Activated naive CD4-positive, alpha-beta T cell treated with anti-CD3 and anti-CD28 coated beads for 36 hours (primary cell): ENCODE measurements at regions of chr17 and their contacts with region 1.

Region 1: DNA sequence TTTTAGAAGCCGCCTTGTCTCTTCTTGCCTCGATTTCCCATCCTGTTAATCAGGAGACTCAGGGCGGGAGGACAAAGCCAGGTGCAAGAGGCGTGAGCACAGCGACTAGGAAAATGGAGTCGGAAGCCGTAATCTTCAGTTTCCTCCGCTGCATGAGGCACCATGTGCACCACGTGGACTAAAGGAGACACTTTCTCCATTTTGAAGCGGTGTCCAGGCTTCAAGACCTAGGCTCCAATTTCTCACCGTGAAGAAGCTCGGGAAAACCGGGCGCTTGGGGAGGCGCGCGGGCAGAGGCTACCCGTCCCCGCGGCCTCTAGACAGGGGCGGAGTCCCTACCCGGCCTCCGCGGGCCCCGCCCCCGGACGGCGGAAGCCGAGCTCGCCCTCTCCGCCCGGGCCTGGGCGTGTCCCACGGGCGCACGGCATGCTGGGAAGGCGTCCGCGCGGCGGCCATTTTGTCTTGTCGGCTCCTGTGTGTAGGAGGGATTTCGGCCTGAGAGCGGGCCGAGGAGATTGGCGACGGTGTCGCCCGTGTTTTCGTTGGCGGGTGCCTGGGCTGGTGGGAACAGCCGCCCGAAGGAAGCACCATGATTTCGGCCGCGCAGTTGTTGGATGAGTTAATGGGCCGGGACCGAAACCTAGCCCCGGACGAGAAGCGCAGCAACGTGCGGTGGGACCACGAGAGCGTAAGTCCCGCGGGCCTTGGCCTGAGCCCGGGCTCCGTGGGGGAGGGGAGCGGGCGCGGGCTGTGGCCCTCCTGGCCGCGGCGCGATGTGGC is at the start of gene LUC7L3:
- DNase-seq: peak; percentile 95
- H3K4me3 Mint-ChIP-seq: peak within 1 kb of the TSS; percentile 97
- H3K27ac Mint-ChIP-seq: peak within 1 kb of the TSS; percentile 98
- H3K4me1 Mint-ChIP-seq: peaks cover 25% of the 10 kb centered on the region
- H3K27me3 Mint-ChIP-seq: no peaks in the 10 kb centered on the region
- total RNA-seq, gene LUC7L3: 120 to 136 TPM

Region 2: DNA sequence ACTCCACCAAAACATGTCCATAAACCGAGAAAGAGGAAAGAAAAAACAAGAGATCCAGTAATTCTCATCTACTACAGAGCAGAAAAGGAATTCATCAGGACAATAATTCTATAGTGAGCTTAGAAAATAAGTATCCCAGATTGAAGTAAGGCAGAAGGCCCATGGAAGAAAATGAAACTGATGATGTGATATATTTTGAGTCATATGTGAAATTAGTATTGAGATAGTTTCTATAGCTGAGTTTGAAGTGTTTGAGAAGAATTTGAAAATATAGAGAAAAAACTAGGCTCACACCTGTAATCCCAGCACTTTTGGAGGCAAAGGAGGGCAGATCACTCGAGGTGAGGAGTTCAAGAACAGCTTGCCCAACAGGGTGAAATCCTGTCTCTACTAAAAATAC is 19.8 kb after region 1 on chr17:
- CTCF ChIA-PET with region 1: interaction called, 3 read pairs
- intact Hi-C with region 1: loop called (anchors 2 kb)
- DNase-seq: no peak
- H3K4me3 Mint-ChIP-seq: no peak overlapping the region
- H3K27ac Mint-ChIP-seq: peak overlapping the region; percentile 54
- H3K4me1 Mint-ChIP-seq: peaks cover 52% of the 10 kb centered on the region
- H3K27me3 Mint-ChIP-seq: no peaks in the 10 kb centered on the region

Region 3: DNA sequence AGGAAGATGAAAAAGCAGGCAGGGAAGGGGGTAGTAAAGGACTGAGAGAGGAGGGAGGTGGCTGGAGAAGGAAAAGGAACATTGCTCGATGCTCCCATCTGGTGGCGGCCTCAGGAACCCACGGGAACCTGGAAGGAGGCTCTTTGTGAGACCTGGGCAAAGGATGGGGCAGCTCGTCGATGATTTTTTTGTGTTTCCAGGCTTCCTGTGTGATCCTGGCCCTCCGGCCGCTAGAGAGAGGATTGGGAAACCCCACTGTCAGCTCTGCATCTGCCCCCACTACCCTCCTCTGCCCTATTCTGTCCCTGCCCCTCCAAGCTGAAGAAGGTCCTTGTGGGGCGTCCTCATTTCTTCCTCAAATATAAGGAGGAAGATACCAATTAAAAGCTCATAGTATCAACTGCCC is 122.6 kb after region 1 on chr17:
- CTCF ChIA-PET with region 1: no interaction called
- intact Hi-C with region 1: no loop called
- DNase-seq: peak; percentile 73
- H3K4me3 Mint-ChIP-seq: no peak overlapping the region
- H3K27ac Mint-ChIP-seq: no peak overlapping the region
- H3K4me1 Mint-ChIP-seq: peaks cover 3% of the 10 kb centered on the region
- H3K27me3 Mint-ChIP-seq: no peaks in the 10 kb centered on the region